Posterior cingulate gyrus (tissue), 11 donors: ENCODE measurements at regions of chr10 and their contacts with region 1.

Region 1: GRCh38 chr10:24724381-24725228 is 918 bp upstream of the ARHGAP21 start:
- DNase-seq: peak; percentile 98 to 100 (median 99)

Region 2: DNA sequence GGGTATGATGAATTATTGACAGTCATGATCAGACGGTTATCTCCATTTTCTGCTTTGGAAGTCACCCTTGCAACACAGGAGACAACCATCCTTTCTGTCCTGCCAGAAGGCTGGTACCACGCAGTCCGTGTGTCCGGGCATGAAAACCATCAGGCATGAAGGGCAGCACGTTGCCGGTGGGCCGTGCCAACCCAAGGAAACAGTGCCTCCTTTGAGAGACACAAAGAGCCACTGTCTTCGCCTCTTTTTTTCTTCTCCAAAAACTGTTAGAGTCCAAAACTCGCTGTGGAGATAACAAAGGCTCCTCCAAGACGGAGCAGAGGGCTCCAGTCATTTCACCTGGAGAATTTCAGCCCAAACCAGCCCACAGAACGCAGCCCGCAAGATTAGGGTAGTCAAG is 59.5 kb after region 1 on chr10:
- intact Hi-C with region 1: loop called (anchors 2 kb)
- DNase-seq: peak; percentile 72 to 98 (median 88)

Region 3: GRCh38 chr10:24851629-24852028 is 127.0 kb after region 1 on chr10:
- intact Hi-C with region 1: loop called (anchors 10 kb)
- DNase-seq: peak in 1 of 10 donors; percentile 22

Region 4: DNA sequence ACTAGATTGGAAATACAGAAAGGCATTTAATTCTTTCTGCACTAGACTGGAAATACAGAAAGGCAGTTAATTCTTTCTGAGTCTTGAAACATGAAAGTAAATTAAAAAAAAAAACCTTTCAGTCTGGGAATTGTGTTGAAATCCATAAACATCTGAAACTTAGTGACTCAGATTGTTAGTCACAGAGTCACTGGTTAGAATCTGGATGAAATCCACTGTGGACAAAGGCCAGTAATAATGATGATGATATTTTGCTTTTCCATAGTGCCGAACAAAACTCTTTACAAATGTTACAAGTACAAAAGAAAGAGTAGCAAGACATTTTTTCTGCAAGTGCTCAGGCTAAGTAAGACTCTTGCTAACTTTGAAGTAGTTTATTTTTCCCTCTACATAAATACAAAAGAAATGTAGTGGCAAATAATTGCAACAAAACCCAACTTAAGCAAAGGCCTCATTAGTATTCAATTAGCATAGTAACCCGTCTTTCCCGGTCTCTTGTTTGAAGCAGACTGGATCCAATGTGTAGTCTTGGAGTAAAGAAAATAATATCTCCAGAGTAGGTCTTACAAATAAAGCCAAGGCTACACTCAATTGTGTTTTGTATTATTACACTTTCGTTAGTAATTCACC is 233.6 kb after region 1 on chr10:
- intact Hi-C with region 1: loop called (anchors 1 kb)
- DNase-seq: no peak

Region 5: DNA sequence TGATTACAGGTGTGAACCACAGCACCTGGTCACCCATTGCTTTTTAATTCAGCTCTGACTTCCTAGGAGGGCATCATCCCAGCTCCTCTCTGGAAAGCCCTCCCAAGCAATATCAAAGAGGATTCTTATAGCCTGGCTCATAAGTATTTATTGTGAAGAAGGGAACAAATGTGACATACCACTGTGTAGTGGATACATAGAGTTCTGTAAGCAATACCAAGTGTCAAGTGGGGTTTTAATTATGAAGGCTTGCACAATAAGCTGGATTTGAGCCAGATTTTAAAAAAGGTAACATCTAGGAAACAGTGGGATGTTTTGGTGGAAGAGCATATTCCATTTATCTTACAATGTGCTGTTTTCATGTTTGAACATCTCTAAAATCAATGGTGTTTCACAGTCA is 246.8 kb after region 1 on chr10:
- intact Hi-C with region 1: no loop called
- DNase-seq: no peak

Region 6: DNA sequence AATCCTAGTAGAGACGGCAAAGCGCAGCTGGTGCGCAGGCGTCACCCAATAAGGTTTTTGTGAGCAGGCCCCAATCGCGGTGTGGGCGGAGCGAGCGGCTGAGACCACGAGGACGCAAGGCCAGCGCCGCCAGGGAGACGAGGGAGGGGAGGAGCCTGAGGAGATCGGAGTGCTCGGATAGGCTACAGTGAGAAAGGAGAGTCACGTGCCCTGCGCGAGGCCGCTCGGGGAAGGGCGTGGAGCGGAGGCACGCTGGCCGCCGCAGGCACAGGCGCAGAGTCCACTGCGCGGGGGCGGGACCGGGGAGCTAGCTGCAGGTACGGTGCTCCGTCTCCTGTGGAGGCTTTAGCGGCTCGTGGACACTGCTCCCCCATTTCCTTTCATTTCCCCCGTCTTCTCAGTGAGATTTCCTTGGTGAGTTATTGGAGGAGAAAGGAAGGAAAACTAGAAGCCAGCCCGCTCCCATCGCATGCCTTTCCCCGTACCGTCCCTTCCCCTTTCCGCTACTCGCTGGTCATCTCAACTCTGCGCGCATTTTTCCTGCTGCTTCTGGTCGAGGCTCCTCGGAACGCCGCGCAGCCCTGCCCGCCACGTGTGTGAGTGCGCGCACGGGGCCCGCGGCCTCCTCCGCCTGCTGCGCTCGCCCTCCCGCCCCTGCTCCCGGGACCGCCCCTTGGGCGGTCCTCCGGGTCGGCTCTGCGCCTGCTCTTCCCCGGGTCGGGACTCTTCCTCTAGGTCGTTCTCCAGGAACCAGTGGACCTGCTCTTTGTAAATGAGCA is 292.0 kb after region 1 on chr10 and contains the start of gene THNSL1:
- intact Hi-C with region 1: loop called (anchors 5 kb)
- DNase-seq: peak; percentile 96 to 100 (median 98)